Pancreas (tissue), 10 donors: ENCODE measurements at regions of chr5 and their contacts with region 1.

Region 1: GRCh38 chr5:176660860-176661641 is 13.8 kb downstream of the TSPAN17 start:
- DNase-seq: peak; percentile 46 to 89 (median 74)
- ATAC-seq: peak; percentile 85 to 89 (median 87)
- H3K4me3 ChIP-seq: no peak overlapping the region
- H3K27ac ChIP-seq: no peak overlapping the region
- H3K4me1 ChIP-seq: peaks cover 0 to 5% (median 0%) of the 10 kb centered on the region in 3 donors
- H3K27me3 ChIP-seq: no peaks in the 10 kb centered on the region
- CTCF ChIP-seq: peak; percentile 96 to 98 (median 98)

Region 2: GRCh38 chr5:176959051-176959450 is 298.0 kb after region 1 on chr5:
- intact Hi-C with region 1: loop called in 2 of 3 experiments (anchors 5 to 10 kb)
- DNase-seq: no peak
- ATAC-seq: peak in 3 of 4 donors; percentile 58 to 75 (median 62)
- H3K4me3 ChIP-seq: no peak overlapping the region
- H3K27ac ChIP-seq: no peak overlapping the region
- H3K4me1 ChIP-seq: no peaks in the 10 kb centered on the region
- H3K27me3 ChIP-seq: no peaks in the 10 kb centered on the region
- CTCF ChIP-seq: peak in 2 of 4 donors; percentile 12 to 27

Region 3: DNA sequence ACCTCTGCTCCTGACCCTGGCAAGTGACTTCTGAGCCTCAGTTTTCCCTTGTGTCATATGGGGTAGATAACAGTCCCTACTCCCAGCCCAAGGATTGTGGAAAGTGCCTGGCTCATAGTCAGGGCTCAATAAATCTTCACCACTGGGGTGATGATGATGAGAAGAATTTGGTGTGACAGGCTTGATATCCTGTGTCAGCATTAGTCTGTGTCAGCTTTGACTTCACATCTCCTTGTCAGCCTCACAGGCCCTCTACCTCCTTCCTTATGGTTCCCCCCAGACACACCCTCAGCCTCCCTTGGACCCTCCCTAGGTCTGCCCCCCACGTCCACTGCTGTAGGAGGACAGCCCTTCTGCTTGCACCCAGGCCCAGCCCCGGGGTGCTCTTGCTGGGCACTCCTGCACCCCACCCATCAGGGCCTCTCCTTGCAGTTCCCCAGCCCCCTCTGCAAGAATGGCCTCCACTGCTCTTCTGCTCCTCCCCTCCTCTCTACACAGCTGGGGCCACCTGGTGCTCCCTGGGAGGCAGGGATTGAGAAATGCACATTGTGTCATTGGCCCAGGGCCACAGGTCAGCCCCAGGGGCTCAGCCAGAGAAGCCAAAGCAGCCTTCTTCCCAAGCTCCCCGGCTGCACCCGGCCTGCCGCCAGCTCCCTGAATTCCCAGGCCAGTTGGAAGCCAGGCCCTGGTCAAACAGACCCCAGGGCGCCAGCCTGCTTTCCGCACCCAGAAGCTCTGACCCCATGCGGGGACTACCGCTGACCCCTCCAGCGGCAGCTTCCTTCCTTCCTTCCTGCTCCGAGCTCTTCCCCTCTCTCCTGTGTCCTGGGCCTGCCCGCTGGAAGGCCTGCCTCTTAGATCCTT is 433.4 kb after region 1 on chr5:
- intact Hi-C with region 1: loop called in 1 of 3 experiments (anchors 10 kb)
- DNase-seq: peak in 4 of 6 donors; percentile 55 to 79 (median 72)
- ATAC-seq: peak; percentile 59 to 80 (median 74)
- H3K4me3 ChIP-seq: no peak overlapping the region
- H3K27ac ChIP-seq: peak overlapping the region; percentile 27 to 74 (median 53)
- H3K4me1 ChIP-seq: peaks cover 0 to 6% (median 6%) of the 10 kb centered on the region in 3 donors
- H3K27me3 ChIP-seq: no peaks in the 10 kb centered on the region
- CTCF ChIP-seq: no peak